H1 (cell line): ENCODE measurements at regions of chr20 and their contacts with region 1.

Region 1: GRCh38 chr20:21615617-21616080 is 89.8 kb upstream of the PAX1 start:
- DNase-seq: peak; percentile 34 to 87
- H3K4me3 ChIP-seq: no peak overlapping the region
- H3K27ac ChIP-seq: no peak overlapping the region
- H3K4me1 ChIP-seq: no peaks in the 10 kb centered on the region
- H3K27me3 ChIP-seq: no peaks in the 10 kb centered on the region; a peak in 1 of 7 replicates
- CTCF ChIP-seq: peak; percentile 92 to 96 (median 95)
- EP300 ChIP-seq: no peak
- POLR2A ChIP-seq: no peak
- RAD21 ChIP-seq: peak; percentile 95 to 96

Region 2: DNA sequence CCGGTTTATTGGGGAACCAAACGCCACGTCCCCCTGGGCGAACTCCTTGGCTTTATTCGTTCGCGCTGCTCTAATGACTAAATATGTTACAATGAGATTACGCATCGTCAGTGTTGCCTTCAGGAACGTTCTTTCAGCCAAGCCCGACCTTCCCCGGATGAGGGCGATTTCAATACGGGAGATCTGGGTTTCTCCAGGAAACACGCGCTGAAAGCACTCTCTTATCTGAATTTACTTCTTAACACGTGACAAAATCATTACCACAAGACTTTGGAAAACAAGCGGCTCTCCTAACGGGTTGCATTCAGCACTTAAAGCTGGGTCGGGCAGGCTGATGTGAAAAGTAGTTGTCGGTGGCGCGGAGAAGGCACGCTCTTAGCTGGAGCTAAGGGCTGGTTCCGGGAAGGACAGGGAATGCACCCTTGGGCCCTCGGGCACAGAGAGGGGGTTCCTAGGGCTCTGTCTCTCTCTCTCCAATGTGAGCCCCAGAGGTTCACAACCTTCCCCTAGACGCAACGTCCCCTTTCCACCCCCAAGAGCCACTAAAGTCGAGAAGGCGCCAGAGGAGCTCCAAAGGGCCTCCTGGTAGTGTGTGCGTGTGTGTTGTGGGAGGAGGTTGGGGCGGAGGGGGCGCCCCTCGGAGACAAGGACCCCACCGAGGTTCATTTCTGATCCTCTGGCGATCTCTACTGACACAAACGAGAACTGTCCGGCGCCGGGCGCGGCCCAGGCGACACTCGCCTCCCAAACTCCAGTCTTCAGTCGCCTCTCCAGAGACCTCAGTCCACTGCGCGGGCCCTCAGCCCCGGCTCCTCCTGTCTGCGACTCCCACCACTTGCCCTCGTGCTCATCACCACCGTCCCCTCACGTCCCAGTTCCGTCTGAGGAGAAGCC is 94.7 kb before region 1 on chr20:
- CTCF ChIA-PET with region 1: interaction called, 21 read pairs
- POLR2A ChIA-PET with region 1: no interaction called
- DNase-seq: no peak
- H3K4me3 ChIP-seq: peak overlapping the region; percentile 32 to 59 (median 34); a peak in 7 of 8 replicates
- H3K27ac ChIP-seq: no peak overlapping the region
- H3K4me1 ChIP-seq: peaks cover 19 to 53% (median 31%) of the 10 kb centered on the region in 4 experiments
- H3K27me3 ChIP-seq: peaks cover 94 to 100% (median 100%) of the 10 kb centered on the region in 4 experiments
- CTCF ChIP-seq: peak; percentile 59 to 75 (median 72)
- EP300 ChIP-seq: no peak
- POLR2A ChIP-seq: no peak
- RAD21 ChIP-seq: peak; percentile 77 to 85

Region 3: GRCh38 chr20:21559305-21559704 is 56.3 kb before region 1 on chr20:
- CTCF ChIA-PET with region 1: interaction called, 11 read pairs
- POLR2A ChIA-PET with region 1: no interaction called
- DNase-seq: no peak
- H3K4me3 ChIP-seq: no peak overlapping the region
- H3K27ac ChIP-seq: no peak overlapping the region
- H3K4me1 ChIP-seq: peaks cover 0 to 7% (median 0%) of the 10 kb centered on the region in 4 experiments; a peak in 3 of 7 replicates
- H3K27me3 ChIP-seq: no peaks in the 10 kb centered on the region
- CTCF ChIP-seq: no peak
- EP300 ChIP-seq: no peak
- POLR2A ChIP-seq: no peak
- RAD21 ChIP-seq: no peak

Region 4: GRCh38 chr20:21577551-21577950 is 38.1 kb before region 1 on chr20:
- CTCF ChIA-PET with region 1: interaction called, 19 read pairs
- POLR2A ChIA-PET with region 1: no interaction called
- DNase-seq: no peak
- H3K4me3 ChIP-seq: no peak overlapping the region
- H3K27ac ChIP-seq: no peak overlapping the region
- H3K4me1 ChIP-seq: no peaks in the 10 kb centered on the region
- H3K27me3 ChIP-seq: peaks cover 0 to 1% (median 0%) of the 10 kb centered on the region in 4 experiments; a peak in 1 of 7 replicates
- CTCF ChIP-seq: no peak
- EP300 ChIP-seq: no peak
- POLR2A ChIP-seq: no peak
- RAD21 ChIP-seq: no peak

Region 5: DNA sequence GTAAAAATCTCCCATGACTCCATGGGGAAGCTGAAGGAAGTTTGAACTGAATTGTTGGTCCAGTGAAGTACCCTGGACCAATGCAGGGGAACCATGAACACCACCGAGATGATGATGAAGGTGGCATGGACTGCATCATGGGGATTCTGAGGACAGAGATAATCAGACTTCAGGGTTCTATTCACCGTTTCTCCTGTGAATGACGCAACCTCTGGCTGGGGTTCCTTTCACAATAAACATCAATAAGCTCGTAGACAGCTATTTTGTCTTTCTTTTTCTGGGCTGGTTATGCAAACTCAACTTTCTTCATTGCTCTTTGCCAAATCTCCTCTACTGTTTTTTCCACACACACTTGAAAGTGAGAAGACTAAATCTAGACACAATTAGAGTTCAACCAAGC is 13.8 kb before region 1 on chr20:
- CTCF ChIA-PET with region 1: interaction called, 33 read pairs
- POLR2A ChIA-PET with region 1: no interaction called
- DNase-seq: no peak
- H3K4me3 ChIP-seq: no peak overlapping the region
- H3K27ac ChIP-seq: no peak overlapping the region
- H3K4me1 ChIP-seq: no peaks in the 10 kb centered on the region
- H3K27me3 ChIP-seq: no peaks in the 10 kb centered on the region; a peak in 1 of 7 replicates
- CTCF ChIP-seq: no peak
- EP300 ChIP-seq: no peak
- POLR2A ChIP-seq: no peak
- RAD21 ChIP-seq: no peak